Posterior cingulate gyrus (tissue), 11 donors: ENCODE measurements at regions of chr17 and their contacts with region 1.

Region 1: GRCh38 chr17:75855310-75856081 is at the start of gene WBP2:
- DNase-seq: peak; percentile 96 to 100 (median 98)

Region 2: DNA sequence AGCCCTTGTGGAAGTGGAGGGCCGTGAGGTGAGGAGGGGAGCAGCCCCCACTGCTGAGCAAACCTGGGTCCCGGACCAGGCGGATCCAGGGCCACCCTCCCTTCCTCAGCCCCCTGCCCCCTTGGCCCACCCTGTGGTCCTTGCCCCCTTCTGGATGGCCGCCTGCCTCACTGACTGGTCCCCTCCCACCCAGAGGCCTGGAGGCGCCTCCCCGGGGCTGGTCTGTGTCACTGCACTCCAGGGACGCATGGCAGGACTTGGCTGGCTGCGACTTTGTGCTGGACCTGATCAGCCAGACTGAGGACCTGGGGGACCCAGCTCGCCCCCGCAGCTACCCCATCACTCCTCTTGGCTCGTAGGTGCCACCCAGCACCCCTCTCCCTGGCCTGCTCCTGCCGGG is 241.5 kb before region 1 on chr17:
- intact Hi-C with region 1: no loop called
- DNase-seq: no peak

Region 3: GRCh38 chr17:75784473-75785015 is 71.0 kb before region 1 on chr17 and contains the start of gene UNK:
- intact Hi-C with region 1: loop called (anchors 5 kb)
- DNase-seq: peak; percentile 97 to 99 (median 98)

Region 4: GRCh38 chr17:75877752-75878173 is 22.3 kb after region 1 on chr17:
- intact Hi-C with region 1: loop called (anchors 2 kb)
- DNase-seq: peak in 8 of 10 donors; percentile 47 to 96 (median 72)

Region 5: GRCh38 chr17:75896415-75897159 is 41.1 kb after region 1 on chr17 and contains the start of gene TRIM65:
- intact Hi-C with region 1: loop called (anchors 5 kb)
- DNase-seq: peak; percentile 72 to 97 (median 80)

Region 6: GRCh38 chr17:75927286-75927922 is 71.9 kb after region 1 on chr17:
- intact Hi-C with region 1: no loop called
- DNase-seq: peak in 1 of 10 donors; percentile 33